Aorta (tissue), 5 donors: ENCODE measurements at regions of chr6 and their contacts with region 1.

Region 1: GRCh38 chr6:5003604-5004372 is at the start of gene RPP40:
- DNase-seq: peak; percentile 98 to 100
- ATAC-seq: peak; percentile 100
- H3K4me3 ChIP-seq: peak within 1 kb of the TSS; percentile 27 to 37
- H3K27ac ChIP-seq: peak within 1 kb of the TSS in 1 of 2 donors; percentile 30
- H3K4me1 ChIP-seq: no peaks in the 10 kb centered on the region
- H3K27me3 ChIP-seq: no peaks in the 10 kb centered on the region
- total RNA-seq, gene RPP40: 3.6 to 4.3 TPM

Region 2: DNA sequence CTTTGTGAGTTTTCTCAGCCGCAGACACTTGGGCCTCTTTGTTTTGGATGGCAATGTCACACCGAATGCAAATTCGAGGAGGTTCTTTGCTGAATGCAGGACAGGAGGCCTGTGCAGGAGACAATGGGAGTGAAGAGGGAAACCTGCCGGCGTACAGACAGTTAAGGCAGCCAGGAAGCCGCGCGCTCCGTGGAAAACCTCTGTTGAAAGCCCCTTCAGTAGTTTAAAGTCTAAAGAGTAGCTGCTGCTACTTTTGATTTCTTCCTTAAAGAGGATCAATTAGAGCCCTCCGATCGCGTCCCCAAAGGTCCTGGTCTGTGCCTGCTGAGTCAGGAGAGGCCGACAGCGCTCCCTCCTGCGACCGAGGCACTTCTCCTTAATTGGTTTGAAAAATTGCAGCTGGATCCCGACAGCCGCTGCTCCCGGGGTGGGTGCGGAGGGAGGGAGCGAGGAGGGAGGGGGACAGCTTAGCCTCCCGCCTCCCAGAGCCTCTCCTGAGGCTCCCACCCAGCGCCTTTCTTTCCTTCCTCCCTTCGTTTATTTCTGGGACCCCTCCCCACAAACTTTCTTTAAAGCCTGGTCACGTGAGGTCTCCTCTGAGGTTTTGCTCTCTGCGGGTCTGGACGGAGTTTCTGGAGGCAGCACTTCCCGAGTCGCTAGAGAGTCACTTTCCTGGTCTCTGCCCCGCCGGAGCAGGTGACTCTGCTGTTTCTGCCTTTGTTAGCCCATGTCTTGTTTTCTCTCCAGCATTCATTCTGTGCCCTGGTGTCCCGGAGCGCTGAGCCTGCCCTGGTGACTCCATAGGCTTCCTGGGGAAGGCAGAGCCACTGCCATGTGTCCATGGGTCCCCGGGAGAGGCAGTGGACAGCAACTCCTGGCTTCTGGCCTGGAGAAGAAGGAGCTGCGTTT is 22.4 kb after region 1 on chr6:
- intact Hi-C with region 1: loop called in 1 of 2 experiments (anchors 1 kb)
- DNase-seq: peak; percentile 77 to 87
- ATAC-seq: peak; percentile 87
- H3K4me3 ChIP-seq: peak overlapping the region; percentile 48 to 96
- H3K27ac ChIP-seq: peak overlapping the region in 1 of 2 donors; percentile 69
- H3K4me1 ChIP-seq: no peaks in the 10 kb centered on the region
- H3K27me3 ChIP-seq: no peaks in the 10 kb centered on the region

Region 3: DNA sequence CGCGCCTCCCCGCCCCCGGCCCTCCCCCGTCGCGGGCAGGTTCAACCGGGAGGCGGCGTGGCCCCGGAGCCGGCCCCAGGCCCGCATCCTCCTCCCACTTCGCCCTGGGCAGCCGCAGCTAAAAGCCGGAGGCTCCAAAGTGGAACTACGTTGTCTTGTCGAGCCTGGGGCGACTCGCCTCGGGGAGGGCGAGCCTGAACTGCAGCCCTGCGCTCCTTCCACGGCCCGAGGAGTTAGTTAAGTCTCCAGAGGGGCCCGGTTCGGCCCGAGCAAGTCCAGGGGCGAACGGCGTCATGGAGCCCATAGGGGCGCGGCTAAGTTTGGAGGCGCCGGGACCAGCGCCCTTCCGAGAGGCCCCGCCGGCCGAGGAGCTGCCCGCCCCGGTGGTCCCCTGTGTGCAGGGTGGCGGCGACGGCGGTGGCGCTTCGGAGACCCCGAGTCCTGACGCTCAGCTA is 81.4 kb after region 1 on chr6 and contains the start of gene PPP1R3G:
- intact Hi-C with region 1: loop called in 1 of 2 experiments (anchors 10 kb)
- DNase-seq: peak; percentile 74 to 83
- ATAC-seq: peak; percentile 76
- H3K4me3 ChIP-seq: peak within 1 kb of the TSS; percentile 53 to 67
- H3K27ac ChIP-seq: peak within 1 kb of the TSS in 1 of 2 donors; percentile 21
- H3K4me1 ChIP-seq: no peaks in the 10 kb centered on the region
- H3K27me3 ChIP-seq: no peaks in the 10 kb centered on the region
- total RNA-seq, gene PPP1R3G: 1.7 to 5.3 TPM